T-cell (primary cell): ENCODE measurements at regions of chr12 and their contacts with region 1.

Region 1: GRCh38 chr12:18919871-18920511 is 182.1 kb downstream of the CAPZA3 start:
- DNase-seq: no peak
- ATAC-seq: no peak
- H3K4me3 ChIP-seq: no peak overlapping the region
- H3K4me3 Mint-ChIP-seq: no peak overlapping the region
- H3K27ac ChIP-seq: no peak overlapping the region
- H3K27ac Mint-ChIP-seq: no peak overlapping the region
- H3K4me1 ChIP-seq: no peaks in the 10 kb centered on the region
- H3K4me1 Mint-ChIP-seq: no peaks in the 10 kb centered on the region
- H3K27me3 ChIP-seq: no peaks in the 10 kb centered on the region
- H3K27me3 Mint-ChIP-seq: peaks cover 1 to 4% of the 10 kb centered on the region in 2 donors

Region 2: GRCh38 chr12:18290386-18290785 is 629.6 kb before region 1 on chr12:
- CTCF ChIA-PET with region 1: no interaction called
- POLR2A ChIA-PET with region 1: no interaction called
- DNase-seq: no peak
- ATAC-seq: no peak
- H3K4me3 ChIP-seq: no peak overlapping the region
- H3K4me3 Mint-ChIP-seq: no peak overlapping the region
- H3K27ac ChIP-seq: no peak overlapping the region
- H3K27ac Mint-ChIP-seq: no peak overlapping the region
- H3K4me1 ChIP-seq: no peaks in the 10 kb centered on the region
- H3K4me1 Mint-ChIP-seq: no peaks in the 10 kb centered on the region
- H3K27me3 ChIP-seq: no peaks in the 10 kb centered on the region
- H3K27me3 Mint-ChIP-seq: no peaks in the 10 kb centered on the region

Region 3: GRCh38 chr12:18932715-18933114 is 12.7 kb after region 1 on chr12:
- CTCF ChIA-PET with region 1: no interaction called
- POLR2A ChIA-PET with region 1: no interaction called
- DNase-seq: no peak
- ATAC-seq: no peak
- H3K4me3 ChIP-seq: no peak overlapping the region
- H3K4me3 Mint-ChIP-seq: no peak overlapping the region
- H3K27ac ChIP-seq: no peak overlapping the region
- H3K27ac Mint-ChIP-seq: no peak overlapping the region
- H3K4me1 ChIP-seq: no peaks in the 10 kb centered on the region
- H3K4me1 Mint-ChIP-seq: no peaks in the 10 kb centered on the region
- H3K27me3 ChIP-seq: no peaks in the 10 kb centered on the region
- H3K27me3 Mint-ChIP-seq: no peaks in the 10 kb centered on the region

Region 4: DNA sequence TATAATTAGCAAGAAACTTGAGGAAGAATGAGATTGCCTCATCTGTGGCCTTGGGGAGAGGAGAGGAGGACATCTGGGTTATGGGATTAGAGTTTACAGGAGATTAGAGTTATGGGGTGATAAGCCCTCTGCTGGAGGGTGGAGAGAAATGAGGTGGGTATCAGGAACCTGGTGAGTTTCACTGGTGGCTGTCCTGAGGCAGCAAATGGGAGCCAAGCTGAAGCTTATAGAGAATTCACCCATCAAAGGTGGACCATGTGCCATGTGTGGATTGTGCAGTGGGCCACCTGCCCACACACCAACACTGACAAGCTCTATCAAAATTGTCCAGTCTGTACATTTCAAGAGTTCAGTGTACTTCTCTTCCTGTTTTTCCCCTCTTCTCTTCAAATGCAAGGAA is 654.6 kb after region 1 on chr12:
- CTCF ChIA-PET with region 1: no interaction called
- POLR2A ChIA-PET with region 1: interaction called in 1 of 2 experiments, 10 read pairs
- DNase-seq: no peak
- ATAC-seq: no peak
- H3K4me3 ChIP-seq: no peak overlapping the region
- H3K4me3 Mint-ChIP-seq: no peak overlapping the region
- H3K27ac ChIP-seq: no peak overlapping the region
- H3K27ac Mint-ChIP-seq: no peak overlapping the region
- H3K4me1 ChIP-seq: no peaks in the 10 kb centered on the region
- H3K4me1 Mint-ChIP-seq: no peaks in the 10 kb centered on the region
- H3K27me3 ChIP-seq: no peaks in the 10 kb centered on the region
- H3K27me3 Mint-ChIP-seq: no peaks in the 10 kb centered on the region